Posterior cingulate gyrus (tissue), 11 donors: ENCODE measurements at regions of chr17 and their contacts with region 1.

Region 1: GRCh38 chr17:13594762-13595598 is 6.7 kb downstream of the HS3ST3A1 start:
- DNase-seq: peak in 8 of 10 donors; percentile 28 to 93 (median 74)

Region 2: GRCh38 chr17:14302431-14303099 is 707.6 kb after region 1 on chr17:
- intact Hi-C with region 1: loop called (anchors 1 kb)
- DNase-seq: peak; percentile 47 to 96 (median 64)

Region 3: GRCh38 chr17:14926526-14927122 is 1331.6 kb after region 1 on chr17:
- intact Hi-C with region 1: loop called (anchors 1 kb)
- DNase-seq: peak in 6 of 10 donors; percentile 18 to 80 (median 50)